H1 (cell line): ENCODE measurements at regions of chr17 and their contacts with region 1.

Region 1: GRCh38 chr17:2386400-2387085 is 14.3 kb downstream of the MNT start:
- DNase-seq: no peak
- H3K4me3 ChIP-seq: no peak overlapping the region
- H3K27ac ChIP-seq: no peak overlapping the region
- H3K4me1 ChIP-seq: peaks cover 0 to 15% (median 7%) of the 10 kb centered on the region in 4 experiments; a peak in 5 of 7 replicates
- H3K27me3 ChIP-seq: no peaks in the 10 kb centered on the region
- CTCF ChIP-seq: no peak
- EP300 ChIP-seq: no peak
- POLR2A ChIP-seq: no peak
- RAD21 ChIP-seq: no peak

Region 2: GRCh38 chr17:2354311-2354710 is 32.2 kb before region 1 on chr17:
- CTCF ChIA-PET with region 1: interaction called, 19 read pairs
- POLR2A ChIA-PET with region 1: interaction called, 3 read pairs
- DNase-seq: no peak
- H3K4me3 ChIP-seq: no peak overlapping the region
- H3K27ac ChIP-seq: no peak overlapping the region
- H3K4me1 ChIP-seq: peaks cover 0 to 4% (median 0%) of the 10 kb centered on the region in 4 experiments; a peak in 1 of 7 replicates
- H3K27me3 ChIP-seq: no peaks in the 10 kb centered on the region
- CTCF ChIP-seq: no peak
- EP300 ChIP-seq: no peak
- POLR2A ChIP-seq: no peak
- RAD21 ChIP-seq: no peak

Region 3: DNA sequence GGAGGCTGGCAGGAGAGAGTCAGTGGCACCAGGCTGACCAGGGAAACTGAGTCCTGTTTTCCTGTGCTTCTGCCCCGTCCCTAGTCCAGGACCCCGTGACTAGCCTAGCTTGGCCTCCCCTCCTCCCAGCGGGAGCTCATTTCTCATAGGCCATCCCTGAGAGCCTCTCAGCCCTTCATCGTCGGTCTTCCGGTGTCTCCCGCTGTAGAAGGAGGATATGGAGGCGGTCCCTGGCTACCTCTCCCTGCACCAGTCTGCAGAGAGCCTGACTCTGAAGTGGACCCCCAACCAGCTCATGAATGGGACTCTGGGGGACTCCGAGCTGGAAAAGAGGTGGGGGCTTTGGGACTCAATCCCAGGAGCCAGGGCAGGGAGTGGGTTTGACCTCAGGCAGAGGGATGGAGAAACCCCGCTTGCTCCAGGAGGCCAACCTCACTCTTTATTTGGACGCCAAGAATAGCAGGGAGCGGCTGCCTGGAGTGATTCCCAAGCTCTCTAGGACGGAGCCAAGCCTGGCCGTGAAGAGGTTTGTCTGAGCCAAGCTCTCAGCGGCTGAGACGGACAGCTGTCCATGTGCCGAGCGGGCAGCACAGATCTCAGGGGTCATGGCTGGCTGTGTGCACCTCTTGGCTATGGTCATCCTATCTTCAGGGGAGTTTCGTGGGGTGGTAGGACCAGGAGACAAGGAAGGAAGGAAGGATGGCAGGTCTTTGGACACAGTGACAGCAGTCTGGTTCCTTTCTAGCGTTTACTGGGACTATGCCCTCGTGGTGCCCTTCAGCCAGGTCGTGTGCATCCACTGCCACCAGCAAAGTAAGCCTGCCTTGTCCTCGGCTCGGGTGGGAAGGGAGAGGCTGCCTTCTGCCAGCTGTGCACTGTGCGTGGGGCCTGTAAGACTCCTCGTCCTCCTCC is 22.4 kb before region 1 on chr17:
- CTCF ChIA-PET with region 1: interaction called, 209 read pairs
- POLR2A ChIA-PET with region 1: interaction called, 34 read pairs
- DNase-seq: no peak
- H3K4me3 ChIP-seq: no peak overlapping the region
- H3K27ac ChIP-seq: no peak overlapping the region
- H3K4me1 ChIP-seq: peaks cover 0 to 2% (median 0%) of the 10 kb centered on the region in 4 experiments; a peak in 3 of 7 replicates
- H3K27me3 ChIP-seq: no peaks in the 10 kb centered on the region
- CTCF ChIP-seq: no peak
- EP300 ChIP-seq: no peak
- POLR2A ChIP-seq: no peak
- RAD21 ChIP-seq: no peak

Region 4: DNA sequence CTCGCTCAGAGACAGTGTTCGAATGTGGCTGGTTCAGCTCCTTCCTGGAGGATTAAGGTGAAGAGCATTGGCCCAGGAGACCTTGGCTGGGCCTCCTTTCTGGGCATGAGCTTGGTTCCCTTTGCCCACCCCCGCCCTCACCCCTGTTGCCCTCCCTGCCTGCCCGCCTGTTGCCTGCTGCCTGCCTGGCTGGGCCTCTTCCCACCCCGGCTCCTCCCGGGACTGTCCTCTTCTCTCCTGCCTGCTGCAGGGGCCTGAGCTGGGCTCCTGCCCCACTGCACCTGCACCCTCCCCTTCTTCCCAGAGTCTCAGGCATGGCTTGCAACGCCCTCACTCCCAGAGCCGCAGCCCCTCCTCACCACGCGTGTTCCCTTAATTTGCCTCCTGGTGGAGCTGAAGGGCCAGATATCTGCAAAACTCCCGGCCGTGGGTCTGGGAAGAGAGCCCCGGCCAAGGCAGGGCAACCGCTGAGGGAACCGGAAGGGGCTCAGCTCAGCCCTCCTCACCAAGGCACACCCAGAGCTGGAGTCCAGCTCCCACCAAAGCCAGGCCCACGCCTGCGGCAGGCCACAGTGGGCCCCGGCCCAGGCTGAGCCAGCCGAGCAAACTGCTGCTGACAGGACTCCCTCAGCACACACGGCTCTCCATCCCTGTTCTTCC is 16.9 kb before region 1 on chr17:
- CTCF ChIA-PET with region 1: interaction called, 209 read pairs
- POLR2A ChIA-PET with region 1: interaction called, 34 read pairs
- DNase-seq: peak in 1 of 2 experiments; percentile 77
- H3K4me3 ChIP-seq: no peak overlapping the region
- H3K27ac ChIP-seq: no peak overlapping the region
- H3K4me1 ChIP-seq: peaks cover 0 to 12% (median 5%) of the 10 kb centered on the region in 4 experiments; a peak in 3 of 7 replicates
- H3K27me3 ChIP-seq: no peaks in the 10 kb centered on the region
- CTCF ChIP-seq: peak; percentile 45 to 54 (median 48)
- EP300 ChIP-seq: no peak
- POLR2A ChIP-seq: no peak
- RAD21 ChIP-seq: peak; percentile 53 to 64

Region 5: GRCh38 chr17:2435181-2435741 is 48.7 kb after region 1 on chr17:
- CTCF ChIA-PET with region 1: interaction called, 17 read pairs
- POLR2A ChIA-PET with region 1: interaction called, 3 read pairs
- DNase-seq: peak in 1 of 2 experiments; percentile 79
- H3K4me3 ChIP-seq: peak overlapping the region in 3 of 4 experiments; percentile 18 to 39 (median 34); a peak in 5 of 8 replicates
- H3K27ac ChIP-seq: peak overlapping the region; percentile 72
- H3K4me1 ChIP-seq: peaks cover 6 to 17% (median 13%) of the 10 kb centered on the region in 4 experiments
- H3K27me3 ChIP-seq: no peaks in the 10 kb centered on the region
- CTCF ChIP-seq: no peak
- EP300 ChIP-seq: no peak
- POLR2A ChIP-seq: no peak
- RAD21 ChIP-seq: no peak